AG04449 (cell line): ENCODE measurements at regions of chr3 and their contacts with region 1.

Region 1: GRCh38 chr3:169041677-169042171 is 621.8 kb downstream of the MECOM start:
- DNase-seq: no peak
- H3K4me3 ChIP-seq: no peak overlapping the region
- CTCF ChIP-seq: no peak

Region 2: GRCh38 chr3:169029674-169030285 is 11.9 kb before region 1 on chr3:
- CTCF ChIA-PET with region 1: interaction called, 12 read pairs
- POLR2A ChIA-PET with region 1: no interaction called
- DNase-seq: no peak
- H3K4me3 ChIP-seq: no peak overlapping the region
- CTCF ChIP-seq: no peak

Region 3: DNA sequence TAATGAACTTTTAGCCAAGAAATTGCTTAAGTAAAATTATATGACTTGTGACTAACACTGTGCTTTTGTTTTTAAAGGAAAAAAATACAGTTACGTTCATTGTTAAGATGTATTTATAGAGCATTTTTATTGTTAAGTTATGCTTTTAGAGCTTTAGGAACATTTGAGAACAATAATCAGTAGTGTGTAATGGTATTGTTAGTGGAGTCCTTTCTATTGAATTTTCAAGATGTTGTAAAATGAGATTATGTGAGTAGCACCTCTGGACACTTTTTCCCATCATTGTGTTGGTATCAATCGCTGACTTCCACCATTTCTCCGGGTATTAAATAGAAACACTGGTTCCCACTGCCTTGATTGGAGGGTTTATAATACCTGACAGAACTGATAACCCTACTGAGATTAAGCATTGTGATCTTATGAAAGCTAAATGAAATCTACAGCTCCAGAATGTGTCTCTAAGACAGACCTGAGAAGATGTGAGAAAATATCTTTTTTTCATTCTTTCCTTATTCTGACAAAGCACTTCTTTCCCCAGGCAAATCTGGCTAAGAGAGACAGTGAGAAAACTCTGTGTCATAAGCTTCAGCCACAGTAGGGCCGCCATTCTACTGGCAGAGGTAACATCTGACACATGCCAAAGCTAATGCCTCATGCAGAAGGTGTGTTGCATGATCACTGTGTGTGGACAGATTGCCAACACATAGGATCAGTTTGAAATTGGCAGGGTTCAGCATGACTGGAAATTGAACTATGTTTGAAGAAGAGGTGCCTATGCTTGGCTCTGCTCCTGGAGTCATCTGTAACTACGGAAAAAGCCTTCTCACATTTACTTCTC is 11.0 kb after region 1 on chr3:
- CTCF ChIA-PET with region 1: interaction called, 25 read pairs
- POLR2A ChIA-PET with region 1: no interaction called
- DNase-seq: no peak
- H3K4me3 ChIP-seq: no peak overlapping the region
- CTCF ChIP-seq: no peak

Region 4: DNA sequence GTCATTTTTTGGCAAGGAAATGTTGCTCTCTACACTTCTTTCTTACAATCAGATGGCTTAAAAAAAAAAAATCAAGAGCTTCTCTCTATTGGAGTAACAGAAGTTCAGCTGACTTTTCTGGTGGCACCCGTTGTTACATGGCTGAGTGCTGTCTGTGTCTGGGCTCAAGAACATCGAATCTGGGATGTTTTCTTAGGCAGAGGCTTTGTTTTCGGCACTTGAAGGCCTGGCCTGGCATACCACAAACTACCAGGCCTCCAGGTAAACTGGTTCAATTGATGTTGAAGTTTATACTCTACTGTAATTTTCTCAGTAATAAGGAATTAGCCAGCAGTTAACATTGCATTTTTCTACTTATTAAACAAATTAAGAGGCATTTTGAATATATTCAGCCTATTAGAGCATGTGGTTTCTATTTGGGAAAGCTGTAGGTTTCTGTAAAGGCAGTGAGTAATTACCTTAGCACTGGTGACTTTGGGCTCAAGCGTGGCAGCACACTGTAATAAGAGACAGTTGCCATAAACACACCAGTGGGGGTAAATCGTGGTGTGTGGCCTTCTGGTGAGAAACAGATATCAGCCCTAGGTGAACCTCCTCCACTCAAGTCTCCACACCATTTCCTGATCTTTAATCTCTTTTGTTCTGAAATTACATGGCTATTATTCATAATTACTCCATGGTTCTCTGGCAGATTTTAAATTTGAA is 77.1 kb after region 1 on chr3:
- CTCF ChIA-PET with region 1: interaction called, 10 read pairs
- POLR2A ChIA-PET with region 1: no interaction called
- DNase-seq: no peak
- H3K4me3 ChIP-seq: no peak overlapping the region
- CTCF ChIP-seq: no peak